GM12878 (cell line): ENCODE measurements at regions of chr6 and their contacts with region 1.

Region 1: GRCh38 chr6:84449220-84449619 is 221.8 kb upstream of the CEP162 start:
- DNase-seq: no peak
- ATAC-seq: no peak
- H3K4me3 ChIP-seq: no peak overlapping the region
- H3K27ac ChIP-seq: no peak overlapping the region
- H3K4me1 ChIP-seq: no peaks in the 10 kb centered on the region
- H3K27me3 ChIP-seq: no peaks in the 10 kb centered on the region
- CTCF ChIP-seq: no peak
- EP300 ChIP-seq: no peak
- POLR2A ChIP-seq: no peak
- RAD21 ChIP-seq: no peak

Region 2: GRCh38 chr6:84466511-84466910 is 17.3 kb after region 1 on chr6:
- CTCF ChIA-PET with region 1: interaction called, 3 read pairs
- POLR2A ChIA-PET with region 1: interaction called, 3 read pairs
- RAD21 ChIA-PET with region 1: interaction called, 3 read pairs
- SMC1A ChIA-PET with region 1: interaction called, 14 read pairs
- in situ Hi-C with region 1: no loop called
- intact Hi-C with region 1: no loop called
- DNase-seq: no peak
- ATAC-seq: peak; percentile 44
- H3K4me3 ChIP-seq: no peak overlapping the region
- H3K27ac ChIP-seq: no peak overlapping the region
- H3K4me1 ChIP-seq: no peaks in the 10 kb centered on the region
- H3K27me3 ChIP-seq: no peaks in the 10 kb centered on the region
- CTCF ChIP-seq: no peak
- EP300 ChIP-seq: no peak
- POLR2A ChIP-seq: no peak
- RAD21 ChIP-seq: no peak